Mammary epithelial cell (primary cell): ENCODE measurements at regions of chrX and their contacts with region 1.

Region 1: GRCh38 chrX:82218361-82218760 is 1016.5 kb downstream of the SH3BGRL start:
- DNase-seq: peak; percentile 17
- H3K4me3 ChIP-seq: no peak overlapping the region
- H3K27ac ChIP-seq: no peak overlapping the region
- H3K4me1 ChIP-seq: no peaks in the 10 kb centered on the region
- H3K27me3 ChIP-seq: no peaks in the 10 kb centered on the region
- CTCF ChIP-seq: peak; percentile 42 to 61

Region 2: DNA sequence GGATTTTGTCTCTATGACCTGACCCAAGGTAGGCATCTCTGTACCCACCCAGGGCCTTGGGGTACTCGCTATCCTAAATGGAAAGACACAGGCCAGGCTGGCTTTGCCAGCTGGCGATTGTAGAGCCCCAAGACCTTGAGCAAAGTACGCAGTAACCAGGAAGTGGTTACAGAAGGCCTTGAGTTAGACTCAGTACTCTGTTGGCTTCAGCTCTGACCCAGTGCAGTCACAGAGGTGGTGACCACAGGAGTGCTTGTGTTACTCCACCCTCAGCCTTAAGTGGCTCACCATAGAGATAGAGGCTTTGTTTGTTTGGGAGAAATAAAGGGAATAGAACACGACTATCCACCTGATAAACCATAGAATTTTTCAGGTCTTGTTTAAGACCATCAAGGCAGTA is 409.2 kb after region 1 on chrX:
- CTCF ChIA-PET with region 1: no interaction called
- dilution Hi-C with region 1: no loop called
- in situ Hi-C with region 1: no loop called
- intact Hi-C with region 1: no loop called
- DNase-seq: peak; percentile 6
- H3K4me3 ChIP-seq: no peak overlapping the region
- H3K27ac ChIP-seq: no peak overlapping the region
- H3K4me1 ChIP-seq: no peaks in the 10 kb centered on the region
- H3K27me3 ChIP-seq: no peaks in the 10 kb centered on the region
- CTCF ChIP-seq: no peak

Region 3: GRCh38 chrX:82676386-82676785 is 458.0 kb after region 1 on chrX:
- CTCF ChIA-PET with region 1: no interaction called
- dilution Hi-C with region 1: no loop called
- in situ Hi-C with region 1: no loop called
- intact Hi-C with region 1: loop called (anchors 5 kb)
- DNase-seq: no peak
- H3K4me3 ChIP-seq: no peak overlapping the region
- H3K27ac ChIP-seq: no peak overlapping the region
- H3K4me1 ChIP-seq: no peaks in the 10 kb centered on the region
- H3K27me3 ChIP-seq: no peaks in the 10 kb centered on the region
- CTCF ChIP-seq: peak; percentile 37 to 47

Region 4: DNA sequence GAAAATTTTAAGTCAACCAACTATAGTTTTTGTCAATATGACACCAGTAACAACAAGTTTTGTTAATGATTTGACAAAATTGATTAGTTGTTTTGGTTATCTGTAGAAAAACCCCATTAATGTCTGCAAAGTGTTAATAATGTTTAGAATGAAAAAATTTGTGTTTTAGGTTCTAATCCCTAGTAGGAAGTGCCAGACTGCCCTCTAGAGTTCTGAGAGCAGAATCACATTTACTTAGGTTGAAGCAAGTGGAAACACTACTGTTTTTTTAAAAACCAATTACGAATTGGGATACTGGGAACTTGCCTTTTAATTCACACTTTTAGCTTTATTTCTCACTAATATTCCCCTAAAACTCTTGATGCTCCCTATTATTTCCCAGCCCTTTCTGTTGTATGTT is 1541.5 kb after region 1 on chrX:
- CTCF ChIA-PET with region 1: no interaction called
- dilution Hi-C with region 1: no loop called
- in situ Hi-C with region 1: no loop called
- intact Hi-C with region 1: loop called (anchors 10 kb)
- DNase-seq: no peak
- H3K4me3 ChIP-seq: no peak overlapping the region
- H3K27ac ChIP-seq: no peak overlapping the region
- H3K4me1 ChIP-seq: no peaks in the 10 kb centered on the region
- H3K27me3 ChIP-seq: no peaks in the 10 kb centered on the region
- CTCF ChIP-seq: peak; percentile 37 to 64